ENCODE measurements at regions of chr10 and their contacts with region 1.

Region 1: DNA sequence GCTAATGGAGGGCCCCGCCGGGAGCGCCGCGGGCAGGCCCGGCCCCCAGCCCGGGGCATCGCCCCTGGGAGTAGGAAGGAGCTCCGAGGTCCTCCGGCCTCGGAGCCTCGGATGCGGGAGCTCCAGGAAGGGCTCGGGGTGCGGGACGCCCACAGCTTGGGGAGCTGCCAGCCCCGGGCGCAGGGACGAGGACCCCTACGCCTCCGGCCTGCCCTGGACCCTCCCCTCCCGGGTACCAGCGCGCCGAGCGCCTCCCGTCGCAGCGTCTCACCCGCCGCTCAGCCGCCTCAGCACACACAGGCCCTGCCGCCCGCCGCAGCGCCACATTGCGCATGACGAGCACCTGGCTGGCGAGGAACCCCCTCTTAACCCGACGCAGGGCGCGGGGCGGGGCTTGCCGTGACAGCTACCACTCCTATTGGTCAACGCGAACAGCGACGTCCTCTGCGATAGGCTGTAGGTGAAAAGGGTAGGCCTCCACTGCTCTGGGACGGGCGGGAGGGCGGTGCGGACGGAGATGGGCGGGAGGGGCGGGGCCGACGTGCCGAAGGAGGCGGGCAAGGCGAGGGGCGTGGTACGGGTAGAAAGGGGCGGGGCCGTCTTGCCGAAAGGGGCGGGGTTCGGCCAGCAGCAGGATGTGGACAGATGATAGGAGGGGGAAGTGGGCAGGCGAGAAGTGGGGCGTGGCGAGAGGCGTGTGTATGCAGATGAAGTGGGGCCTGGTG is at the start of gene PITRM1:
- DNase-seq: peak; percentile 98 to 100 (median 99)
- ATAC-seq: peak; percentile 91
- H3K4me3 ChIP-seq: peak within 1 kb of the TSS; percentile 71
- H3K4me3 Mint-ChIP-seq: peak within 1 kb of the TSS; percentile 92
- H3K27ac ChIP-seq: peak within 1 kb of the TSS in 1 of 2 donors; percentile 75
- H3K27ac Mint-ChIP-seq: peak within 1 kb of the TSS; percentile 66
- H3K4me1 ChIP-seq: peaks cover 19% of the 10 kb centered on the region
- H3K4me1 Mint-ChIP-seq: peaks cover 18% of the 10 kb centered on the region
- H3K27me3 ChIP-seq: no peaks in the 10 kb centered on the region
- H3K27me3 Mint-ChIP-seq: no peaks in the 10 kb centered on the region
- CTCF ChIP-seq: no peak
- total RNA-seq, gene PITRM1: 76.7 to 77.8 TPM

Region 2: DNA sequence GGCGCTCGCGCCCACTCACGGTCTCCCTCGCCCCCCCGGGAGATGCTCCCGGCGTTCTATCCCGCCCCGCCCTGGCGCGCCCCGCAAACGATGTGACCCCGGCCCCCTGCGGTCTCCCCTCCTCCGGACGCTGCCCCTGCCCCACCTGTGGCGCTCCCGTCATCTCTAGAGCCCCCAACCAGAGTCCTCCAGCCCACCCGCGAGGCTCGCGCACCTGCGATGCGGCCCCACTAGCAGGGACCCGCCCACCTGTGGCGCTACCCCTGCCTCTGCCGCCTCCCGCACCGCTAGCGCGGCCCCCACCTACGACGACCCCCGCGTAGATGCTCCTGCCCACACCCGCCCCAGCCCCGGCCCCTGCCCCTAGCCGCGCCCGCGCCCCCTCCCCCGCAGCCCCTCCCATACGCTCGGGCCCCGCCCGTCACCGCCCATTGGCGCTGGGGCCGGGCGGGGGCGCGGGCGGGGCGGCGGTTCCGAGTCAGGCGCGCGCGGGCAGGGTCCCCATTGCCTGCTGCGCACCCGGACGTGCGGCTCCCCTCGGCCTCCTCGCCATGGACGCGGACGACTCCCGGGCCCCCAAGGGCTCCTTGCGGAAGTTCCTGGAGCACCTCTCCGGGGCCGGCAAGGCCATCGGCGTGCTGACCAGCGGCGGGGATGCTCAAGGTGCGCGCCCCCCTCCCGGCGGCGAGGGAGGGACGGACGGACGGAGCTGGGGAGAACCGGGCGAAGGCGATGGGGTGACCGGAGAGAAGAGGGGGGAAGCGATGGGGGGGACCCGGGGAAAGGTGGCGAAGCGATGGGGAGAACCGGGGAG is 105.4 kb before region 1 on chr10 and contains the start of gene PFKP:
- CTCF ChIA-PET with region 1: no interaction called
- POLR2A ChIA-PET with region 1: interaction called, 6 read pairs
- intact Hi-C with region 1: loop called in 1 of 2 experiments (anchors 2 kb)
- DNase-seq: peak; percentile 35 to 77 (median 56)
- ATAC-seq: peak; percentile 69
- H3K4me3 ChIP-seq: peak within 1 kb of the TSS; percentile 89
- H3K4me3 Mint-ChIP-seq: peak within 1 kb of the TSS; percentile 94
- H3K27ac ChIP-seq: peak within 1 kb of the TSS in 1 of 2 donors; percentile 29
- H3K27ac Mint-ChIP-seq: peak within 1 kb of the TSS; percentile 74
- H3K4me1 ChIP-seq: peaks cover 32% of the 10 kb centered on the region
- H3K4me1 Mint-ChIP-seq: peaks cover 19% of the 10 kb centered on the region
- H3K27me3 ChIP-seq: no peaks in the 10 kb centered on the region
- H3K27me3 Mint-ChIP-seq: no peaks in the 10 kb centered on the region
- CTCF ChIP-seq: no peak
- total RNA-seq, gene PFKP: 32.2 to 38.9 TPM

Region 3: DNA sequence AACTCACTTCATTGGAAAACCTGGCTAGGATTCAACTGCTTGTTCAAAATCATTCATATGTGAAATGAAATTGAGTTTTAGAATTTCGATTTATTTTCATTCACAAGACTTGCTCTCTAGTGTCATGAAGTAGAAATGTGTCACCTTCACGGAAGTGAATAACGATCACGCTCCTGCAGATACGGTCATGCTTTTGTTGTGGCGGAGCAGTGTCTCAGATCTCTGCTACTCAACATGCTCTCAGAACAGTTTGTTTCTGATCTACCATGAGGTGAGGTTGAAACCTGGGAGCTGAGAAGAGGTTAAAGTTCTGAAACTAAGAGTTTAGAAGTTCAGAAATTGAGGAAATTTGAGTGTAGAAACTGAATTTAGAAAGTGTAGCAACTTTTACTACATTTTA is 13.8 kb after region 1 on chr10:
- CTCF ChIA-PET with region 1: no interaction called
- POLR2A ChIA-PET with region 1: interaction called, 11 read pairs
- intact Hi-C with region 1: no loop called
- DNase-seq: peak; percentile 22 to 73 (median 40)
- ATAC-seq: peak; percentile 100
- H3K4me3 ChIP-seq: no peak overlapping the region
- H3K4me3 Mint-ChIP-seq: peak overlapping the region; percentile 26
- H3K27ac ChIP-seq: no peak overlapping the region
- H3K27ac Mint-ChIP-seq: peak overlapping the region; percentile 62
- H3K4me1 ChIP-seq: peaks cover 5% of the 10 kb centered on the region
- H3K4me1 Mint-ChIP-seq: peaks cover 18% of the 10 kb centered on the region
- H3K27me3 ChIP-seq: peaks cover 0 to 4% of the 10 kb centered on the region in 2 experiments
- H3K27me3 Mint-ChIP-seq: peaks cover 13% of the 10 kb centered on the region
- CTCF ChIP-seq: no peak

Region 4: DNA sequence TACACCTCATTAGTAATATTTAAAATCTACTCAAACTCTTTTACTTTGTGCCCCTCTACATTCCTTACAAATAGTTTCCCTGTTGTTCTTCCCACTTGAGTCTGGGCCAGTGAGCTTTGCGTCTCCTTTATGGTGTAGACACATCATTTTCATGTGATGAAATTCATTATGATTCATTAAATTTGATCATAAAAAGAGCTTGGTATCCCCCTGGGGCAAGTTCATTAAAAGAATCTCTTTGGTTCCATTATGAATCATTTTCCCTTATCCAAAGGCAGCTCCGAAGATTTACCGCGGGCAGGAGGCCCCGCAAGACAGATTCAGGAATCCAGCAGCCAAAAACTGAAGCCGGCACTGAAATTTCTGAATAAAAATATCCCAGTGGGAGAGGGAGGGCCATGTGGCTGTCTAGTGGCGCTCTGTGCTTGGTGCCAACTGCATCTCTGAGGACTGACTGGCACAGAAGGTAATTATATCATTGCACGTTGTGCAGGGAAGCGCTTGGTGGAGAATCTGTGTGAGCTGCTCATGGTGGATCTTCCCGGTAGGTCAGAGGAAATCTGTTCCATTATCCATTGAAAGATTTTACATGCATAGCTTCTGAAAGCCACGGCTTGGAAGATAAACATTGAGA is 151.4 kb after region 1 on chr10:
- CTCF ChIA-PET with region 1: no interaction called
- POLR2A ChIA-PET with region 1: no interaction called
- intact Hi-C with region 1: no loop called
- DNase-seq: no peak
- ATAC-seq: no peak
- H3K4me3 ChIP-seq: no peak overlapping the region
- H3K4me3 Mint-ChIP-seq: no peak overlapping the region
- H3K27ac ChIP-seq: no peak overlapping the region
- H3K27ac Mint-ChIP-seq: no peak overlapping the region
- H3K4me1 ChIP-seq: no peaks in the 10 kb centered on the region
- H3K4me1 Mint-ChIP-seq: no peaks in the 10 kb centered on the region
- H3K27me3 ChIP-seq: peaks cover 0 to 2% of the 10 kb centered on the region in 2 experiments
- H3K27me3 Mint-ChIP-seq: peaks cover 3% of the 10 kb centered on the region
- CTCF ChIP-seq: no peak